Vagina (tissue), 2 donors: ENCODE measurements at regions of chr5 and their contacts with region 1.

Region 1: GRCh38 chr5:36241631-36242533 is at the start of gene NADK2:
- DNase-seq: peak in 1 of 2 donors; percentile 98
- H3K4me3 ChIP-seq: peak within 1 kb of the TSS; percentile 94 to 97
- H3K27ac ChIP-seq: peak within 1 kb of the TSS; percentile 98
- H3K4me1 ChIP-seq: peaks cover 43% of the 10 kb centered on the region
- H3K27me3 ChIP-seq: no peaks in the 10 kb centered on the region
- CTCF ChIP-seq: peak; percentile 11 to 71 (median 48)
- POLR2A ChIP-seq: peak in 1 of 2 donors; percentile 91
- total RNA-seq, gene NADK2: 9.6 TPM

Region 2: DNA sequence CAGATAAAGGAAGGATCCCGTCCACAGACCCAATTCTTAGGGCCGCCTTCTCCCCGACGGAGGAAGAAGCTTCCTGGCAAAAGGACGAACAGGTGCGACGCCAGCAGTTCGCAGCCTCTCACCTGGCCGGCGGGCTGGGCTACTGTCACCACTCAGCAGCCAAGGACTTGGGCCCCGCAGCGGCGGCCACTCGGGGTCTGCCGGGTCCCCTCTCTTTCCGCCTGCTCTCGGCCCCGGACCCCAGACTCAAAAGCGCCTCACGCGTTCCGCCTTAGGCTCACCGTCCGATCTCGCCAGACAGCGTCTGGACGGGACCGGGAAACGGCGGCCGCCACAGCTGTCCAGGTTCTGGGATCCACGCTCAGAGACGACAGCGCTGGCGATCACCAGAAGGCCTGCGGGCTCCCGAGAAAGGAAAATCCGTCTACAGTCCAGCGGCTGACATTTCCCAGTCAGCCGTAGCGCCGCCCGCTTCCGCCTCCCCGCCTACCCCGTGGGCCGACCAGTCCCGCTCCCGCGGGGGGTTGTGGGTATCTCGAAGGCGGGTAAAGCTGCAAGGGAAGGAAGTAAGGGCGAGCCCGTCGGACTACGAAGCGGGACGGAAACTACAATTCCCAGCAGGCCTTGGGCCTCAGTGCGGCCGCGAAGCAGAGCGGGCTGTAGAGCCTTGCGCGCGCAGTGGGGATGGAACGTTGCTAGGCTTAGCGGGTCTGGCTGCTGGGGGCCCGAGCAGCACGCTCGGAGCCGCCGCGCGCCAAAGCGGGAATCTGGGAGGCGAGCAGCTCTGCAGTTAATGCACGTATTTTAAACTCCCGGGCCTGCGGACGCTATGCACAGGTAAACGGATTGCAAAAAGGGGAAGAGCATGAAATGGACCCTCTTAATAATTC is 90.2 kb before region 1 on chr5 and contains the starts of genes LMBRD2 and SKP2:
- intact Hi-C with region 1: loop called (anchors 1 kb)
- DNase-seq: peak in 1 of 2 donors; percentile 96
- H3K4me3 ChIP-seq: peak within 1 kb of the TSS; percentile 80 to 98
- H3K27ac ChIP-seq: peak within 1 kb of the TSS; percentile 79
- H3K4me1 ChIP-seq: peaks cover 44% of the 10 kb centered on the region
- H3K27me3 ChIP-seq: no peaks in the 10 kb centered on the region
- CTCF ChIP-seq: peak in 1 of 3 experiments; percentile 23
- POLR2A ChIP-seq: no peak
- total RNA-seq, gene LMBRD2: 5.6 TPM
- total RNA-seq, gene SKP2: 12.0 TPM

Region 3: GRCh38 chr5:36301858-36302603 is 60.1 kb after region 1 on chr5 and contains the start of gene RANBP3L:
- intact Hi-C with region 1: loop called (anchors 5 kb)
- DNase-seq: no peak
- H3K4me3 ChIP-seq: peak within 1 kb of the TSS; percentile 30 to 31
- H3K27ac ChIP-seq: peak within 1 kb of the TSS; percentile 81
- H3K4me1 ChIP-seq: peaks cover 23% of the 10 kb centered on the region
- H3K27me3 ChIP-seq: no peaks in the 10 kb centered on the region
- CTCF ChIP-seq: no peak
- POLR2A ChIP-seq: no peak
- total RNA-seq, gene RANBP3L: 3.2 TPM

Region 4: DNA sequence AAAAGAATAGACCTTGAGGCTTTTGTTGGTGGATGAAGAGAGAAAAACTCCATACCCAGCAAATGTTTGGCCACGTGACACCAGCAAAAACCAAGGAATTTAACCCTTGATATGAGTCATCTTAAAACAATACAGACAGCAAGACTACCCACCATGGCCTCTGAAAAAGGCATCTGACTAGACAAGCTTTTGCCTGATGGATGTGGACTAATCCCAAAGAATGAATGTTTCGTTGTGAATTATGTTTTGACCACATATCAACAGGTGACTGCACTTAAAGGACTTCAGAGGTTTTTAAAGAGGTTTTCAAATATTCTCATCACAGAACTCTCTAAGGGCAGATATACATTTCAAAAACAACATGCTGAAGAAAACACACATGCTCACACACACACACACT is 331.6 kb after region 1 on chr5:
- intact Hi-C with region 1: no loop called
- DNase-seq: no peak
- H3K4me3 ChIP-seq: no peak overlapping the region
- H3K27ac ChIP-seq: no peak overlapping the region
- H3K4me1 ChIP-seq: peaks cover 10% of the 10 kb centered on the region
- H3K27me3 ChIP-seq: no peaks in the 10 kb centered on the region
- CTCF ChIP-seq: no peak
- POLR2A ChIP-seq: no peak